HCT116 (cell line): ENCODE measurements at regions of chr11 and their contacts with region 1.

Region 1: GRCh38 chr11:126676536-126676935 is 321.1 kb downstream of the ST3GAL4 start:
- DNase-seq: no peak
- ATAC-seq: no peak
- H3K4me3 ChIP-seq: no peak overlapping the region
- H3K27ac ChIP-seq: no peak overlapping the region
- H3K4me1 ChIP-seq: no peaks in the 10 kb centered on the region
- H3K27me3 ChIP-seq: peaks cover 68% of the 10 kb centered on the region
- CTCF ChIP-seq: no peak
- POLR2A ChIP-seq: no peak
- RAD21 ChIP-seq: no peak

Region 2: GRCh38 chr11:126662035-126662790 is 14.3 kb before region 1 on chr11:
- CTCF ChIA-PET with region 1: no interaction called
- POLR2A ChIA-PET with region 1: no interaction called
- RAD21 ChIA-PET with region 1: no interaction called
- intact Hi-C with region 1: loop called (anchors 1 kb)
- DNase-seq: no peak
- ATAC-seq: no peak
- H3K4me3 ChIP-seq: no peak overlapping the region
- H3K27ac ChIP-seq: no peak overlapping the region
- H3K4me1 ChIP-seq: no peaks in the 10 kb centered on the region
- H3K27me3 ChIP-seq: peaks cover 35% of the 10 kb centered on the region
- CTCF ChIP-seq: no peak
- POLR2A ChIP-seq: no peak
- RAD21 ChIP-seq: no peak